ENCODE measurements at regions of chr3 and their contacts with region 1.

Region 1: DNA sequence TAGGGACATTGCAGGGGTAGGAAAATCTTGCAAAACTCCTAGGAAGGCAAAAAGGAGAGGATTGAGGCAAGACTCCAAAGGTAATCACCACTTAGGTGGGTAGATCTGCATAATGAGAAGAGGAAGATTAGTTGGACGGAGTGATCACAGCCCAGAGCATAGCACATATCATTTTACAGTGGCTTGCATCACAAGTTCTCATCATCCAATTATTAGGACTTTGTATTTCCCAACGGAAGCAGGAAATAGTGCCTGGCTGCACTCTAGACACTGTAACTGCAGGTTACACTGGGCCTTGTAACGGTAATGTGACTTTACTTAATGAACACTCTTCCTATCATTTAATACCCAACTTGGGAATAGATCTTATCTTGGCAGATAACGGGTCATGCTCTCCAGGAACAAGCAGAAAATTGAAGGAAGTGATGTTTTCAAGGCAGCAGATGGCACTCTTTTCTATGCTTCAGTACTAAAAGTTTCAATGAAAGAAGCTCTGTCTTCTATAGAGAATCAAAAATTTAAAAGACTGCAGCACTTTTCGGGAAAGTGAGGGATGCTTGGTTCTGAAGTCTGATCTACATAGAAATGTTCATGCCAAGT is 101.9 kb upstream of the KCNMB2 start:
- H3K4me3 ChIP-seq: no peak overlapping the region
- H3K27ac ChIP-seq: no peak overlapping the region
- H3K4me1 ChIP-seq: no peaks in the 10 kb centered on the region
- CTCF ChIP-seq: no peak

Region 2: GRCh38 chr3:178320456-178321351 is 113.6 kb before region 1 on chr3:
- CTCF ChIA-PET with region 1: no interaction called
- POLR2A ChIA-PET with region 1: no interaction called
- H3K4me3 ChIP-seq: no peak overlapping the region
- H3K27ac ChIP-seq: no peak overlapping the region
- H3K4me1 ChIP-seq: no peaks in the 10 kb centered on the region
- CTCF ChIP-seq: no peak

Region 3: DNA sequence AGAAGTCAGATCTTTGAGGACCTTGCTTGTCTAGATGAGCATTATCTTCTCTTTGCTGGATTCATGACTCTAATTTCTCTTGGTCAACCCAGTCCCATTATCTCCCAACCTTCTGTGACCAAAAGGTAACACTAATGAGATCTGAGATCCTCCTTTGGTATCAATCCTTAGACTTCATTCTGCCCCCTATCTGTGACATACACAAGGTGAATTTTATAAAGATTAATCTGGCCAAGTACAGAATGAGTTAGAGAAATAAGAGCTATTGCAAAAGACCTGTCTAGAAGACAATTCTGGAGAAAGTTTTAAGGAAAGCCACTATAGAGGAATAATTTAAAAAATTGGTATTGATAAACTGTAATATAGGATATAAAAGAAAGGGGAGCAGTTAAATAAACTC is 11.9 kb before region 1 on chr3:
- CTCF ChIA-PET with region 1: interaction called, 10 read pairs
- POLR2A ChIA-PET with region 1: no interaction called
- H3K4me3 ChIP-seq: no peak overlapping the region
- H3K27ac ChIP-seq: no peak overlapping the region
- H3K4me1 ChIP-seq: no peaks in the 10 kb centered on the region
- CTCF ChIP-seq: no peak

Measured in HEK293 (cell line).